ENCODE measurements at regions of chr6 and their contacts with region 1.

Region 1: GRCh38 chr6:145929037-145929633 is 35.0 kb downstream of the SHPRH start:
- DNase-seq: no peak
- H3K4me3 ChIP-seq: no peak overlapping the region
- H3K27ac ChIP-seq: no peak overlapping the region
- H3K4me1 ChIP-seq: no peaks in the 10 kb centered on the region
- H3K27me3 ChIP-seq: no peaks in the 10 kb centered on the region
- CTCF ChIP-seq: peak; percentile 73

Region 2: GRCh38 chr6:145886226-145886956 is 42.7 kb before region 1 on chr6:
- intact Hi-C with region 1: no loop called
- DNase-seq: no peak
- H3K4me3 ChIP-seq: no peak overlapping the region
- H3K27ac ChIP-seq: no peak overlapping the region
- H3K4me1 ChIP-seq: peaks cover 11% of the 10 kb centered on the region
- H3K27me3 ChIP-seq: no peaks in the 10 kb centered on the region
- CTCF ChIP-seq: no peak

Region 3: GRCh38 chr6:146339716-146340115 is 410.6 kb after region 1 on chr6:
- intact Hi-C with region 1: no loop called
- DNase-seq: no peak
- H3K4me3 ChIP-seq: no peak overlapping the region
- H3K27ac ChIP-seq: no peak overlapping the region
- H3K4me1 ChIP-seq: no peaks in the 10 kb centered on the region
- H3K27me3 ChIP-seq: no peaks in the 10 kb centered on the region
- CTCF ChIP-seq: no peak

Region 4: GRCh38 chr6:146697921-146698320 is 768.8 kb after region 1 on chr6:
- intact Hi-C with region 1: loop called (anchors 10 kb)
- DNase-seq: no peak
- H3K4me3 ChIP-seq: no peak overlapping the region
- H3K27ac ChIP-seq: no peak overlapping the region
- H3K4me1 ChIP-seq: no peaks in the 10 kb centered on the region
- H3K27me3 ChIP-seq: peaks cover 10% of the 10 kb centered on the region
- CTCF ChIP-seq: no peak